ENCODE measurements at regions of chr11 and their contacts with region 1.

Region 1: GRCh38 chr11:86919557-86920210 is 35.5 kb downstream of the FZD4 start:
- DNase-seq: no peak
- ATAC-seq: peak; percentile 65

Region 2: GRCh38 chr11:86523738-86524619 is 395.7 kb before region 1 on chr11:
- intact Hi-C with region 1: no loop called
- DNase-seq: no peak
- ATAC-seq: peak; percentile 36

Region 3: DNA sequence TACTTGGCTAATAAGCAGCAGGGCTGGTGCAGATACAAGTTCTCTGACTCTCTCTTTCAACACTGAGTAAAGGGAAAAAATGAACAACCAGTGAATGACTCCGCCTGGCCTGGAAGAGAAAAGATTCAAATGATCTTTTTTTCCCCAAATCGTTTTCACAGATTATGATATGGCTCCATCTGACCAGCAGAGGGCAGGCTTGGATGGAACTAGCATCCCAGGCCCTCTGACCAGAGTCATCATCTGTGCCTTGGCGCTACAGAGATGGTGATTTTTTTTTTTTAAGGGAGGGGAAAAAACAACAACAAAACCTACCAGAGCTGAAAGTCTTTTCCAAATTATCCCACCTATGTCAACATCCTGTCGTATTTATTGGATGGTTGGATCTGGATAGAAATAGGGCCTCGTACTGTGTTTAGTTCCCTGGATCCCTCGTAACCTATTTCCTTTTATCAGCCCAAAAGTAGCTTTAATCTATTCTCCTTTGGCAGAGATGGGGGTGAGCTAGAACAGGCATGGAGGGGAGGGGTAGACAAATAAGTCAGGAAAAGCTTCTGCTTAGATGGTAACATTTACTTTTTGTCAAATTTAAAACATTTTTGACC is 49.6 kb before region 1 on chr11:
- intact Hi-C with region 1: loop called (anchors 2 kb)
- DNase-seq: peak; percentile 64
- ATAC-seq: peak; percentile 89